ENCODE measurements at regions of chr9 and their contacts with region 1.

Region 1: GRCh38 chr9:124764774-124765438 is 6.2 kb downstream of the NR6A1 start:
- DNase-seq: no peak

Region 2: GRCh38 chr9:124675261-124676158 is 89.4 kb before region 1 on chr9:
- intact Hi-C with region 1: no loop called
- DNase-seq: no peak

Region 3: GRCh38 chr9:124716808-124717207 is 48.1 kb before region 1 on chr9:
- intact Hi-C with region 1: loop called (anchors 10 kb)
- DNase-seq: no peak

Region 4: DNA sequence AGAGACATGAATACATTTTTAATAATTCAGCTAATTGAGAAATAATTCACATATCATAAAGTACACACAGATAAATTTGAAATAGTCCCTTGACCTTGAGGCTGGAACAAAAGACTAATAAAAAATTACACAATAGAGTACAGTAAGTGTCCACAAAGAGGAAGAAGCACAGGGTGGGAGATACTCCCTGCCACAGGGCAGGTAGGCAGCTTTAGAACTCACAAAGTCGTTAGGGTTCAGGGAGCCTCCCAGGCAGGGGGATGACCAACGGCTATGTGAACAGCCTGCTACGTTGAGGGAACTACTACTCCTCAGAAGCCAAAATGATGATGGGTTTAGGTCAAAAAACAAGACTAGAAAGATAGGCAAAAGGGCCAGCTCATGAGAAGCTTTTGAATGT is 143.7 kb after region 1 on chr9:
- intact Hi-C with region 1: no loop called
- DNase-seq: no peak